Common myeloid progenitor, CD34-positive (primary cell): ENCODE measurements at regions of chrX and their contacts with region 1.

Region 1: GRCh38 chrX:68464796-68465195 is 31.5 kb upstream of the OPHN1 start:
- DNase-seq: no peak
- H3K4me3 ChIP-seq: no peak overlapping the region
- H3K27ac ChIP-seq: no peak overlapping the region
- H3K4me1 ChIP-seq: no peaks in the 10 kb centered on the region
- H3K27me3 ChIP-seq: no peaks in the 10 kb centered on the region

Region 2: GRCh38 chrX:68196939-68197791 is 267.6 kb before region 1 on chrX:
- CTCF ChIA-PET with region 1: interaction called, 11 read pairs
- POLR2A ChIA-PET with region 1: no interaction called
- DNase-seq: peak; percentile 29 to 64 (median 59)
- H3K4me3 ChIP-seq: no peak overlapping the region
- H3K27ac ChIP-seq: no peak overlapping the region
- H3K4me1 ChIP-seq: peaks cover 0 to 5% (median 0%) of the 10 kb centered on the region in 4 experiments
- H3K27me3 ChIP-seq: no peaks in the 10 kb centered on the region